A673 (cell line): ENCODE measurements at regions of chr13 and their contacts with region 1.

Region 1: GRCh38 chr13:41668130-41668757 is 210.9 kb downstream of the RGCC start:
- DNase-seq: peak; percentile 90
- H3K4me3 ChIP-seq: no peak overlapping the region
- H3K27ac ChIP-seq: no peak overlapping the region
- H3K4me1 ChIP-seq: no peaks in the 10 kb centered on the region
- H3K27me3 ChIP-seq: no peaks in the 10 kb centered on the region
- CTCF ChIP-seq: peak; percentile 81

Region 2: DNA sequence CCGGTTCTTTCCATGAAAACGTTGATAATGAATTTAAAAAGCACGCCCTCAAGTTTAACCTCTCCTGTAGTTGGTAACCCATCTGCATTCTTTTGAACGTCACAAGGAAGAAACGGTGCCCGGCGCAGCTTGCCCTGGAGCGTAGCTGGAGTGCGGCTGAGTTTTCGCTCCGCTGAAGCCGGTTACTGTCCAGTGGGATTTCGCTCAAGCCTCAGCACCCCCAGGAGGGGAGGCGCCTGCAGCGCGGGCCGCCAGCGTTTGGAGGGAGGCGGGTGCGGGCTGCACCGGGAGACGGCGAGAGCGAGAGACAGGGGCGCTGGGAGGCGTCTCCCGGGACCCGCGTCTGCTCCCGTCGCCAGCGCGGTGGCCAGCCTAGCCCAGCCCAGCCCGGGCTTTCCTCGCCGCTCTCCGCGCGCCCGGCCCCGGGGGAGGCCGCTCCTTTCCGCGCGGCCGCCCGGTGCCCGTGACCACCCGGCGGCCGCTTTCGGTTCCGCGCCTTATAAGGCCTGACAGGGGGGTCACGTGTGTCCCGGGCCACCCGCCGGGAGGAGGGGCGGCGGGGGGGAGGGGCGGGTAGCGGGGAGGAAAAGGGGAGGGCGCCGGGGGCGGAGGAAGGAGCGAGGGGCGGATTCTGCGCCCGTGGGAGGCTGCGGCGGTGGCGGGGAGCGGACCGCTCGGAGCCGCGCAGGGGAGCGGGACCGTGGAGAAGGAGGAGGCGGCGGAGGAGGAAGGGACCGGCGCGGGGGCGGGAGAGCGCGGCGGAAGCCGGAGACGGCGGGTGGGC is 371.9 kb after region 1 on chr13:
- CTCF ChIA-PET with region 1: no interaction called
- POLR2A ChIA-PET with region 1: no interaction called
- intact Hi-C with region 1: loop called (anchors 5 kb)
- DNase-seq: peak; percentile 88
- H3K4me3 ChIP-seq: peak overlapping the region; percentile 75
- H3K27ac ChIP-seq: peak overlapping the region; percentile 81
- H3K4me1 ChIP-seq: peaks cover 12% of the 10 kb centered on the region
- H3K27me3 ChIP-seq: no peaks in the 10 kb centered on the region
- CTCF ChIP-seq: no peak

Region 3: DNA sequence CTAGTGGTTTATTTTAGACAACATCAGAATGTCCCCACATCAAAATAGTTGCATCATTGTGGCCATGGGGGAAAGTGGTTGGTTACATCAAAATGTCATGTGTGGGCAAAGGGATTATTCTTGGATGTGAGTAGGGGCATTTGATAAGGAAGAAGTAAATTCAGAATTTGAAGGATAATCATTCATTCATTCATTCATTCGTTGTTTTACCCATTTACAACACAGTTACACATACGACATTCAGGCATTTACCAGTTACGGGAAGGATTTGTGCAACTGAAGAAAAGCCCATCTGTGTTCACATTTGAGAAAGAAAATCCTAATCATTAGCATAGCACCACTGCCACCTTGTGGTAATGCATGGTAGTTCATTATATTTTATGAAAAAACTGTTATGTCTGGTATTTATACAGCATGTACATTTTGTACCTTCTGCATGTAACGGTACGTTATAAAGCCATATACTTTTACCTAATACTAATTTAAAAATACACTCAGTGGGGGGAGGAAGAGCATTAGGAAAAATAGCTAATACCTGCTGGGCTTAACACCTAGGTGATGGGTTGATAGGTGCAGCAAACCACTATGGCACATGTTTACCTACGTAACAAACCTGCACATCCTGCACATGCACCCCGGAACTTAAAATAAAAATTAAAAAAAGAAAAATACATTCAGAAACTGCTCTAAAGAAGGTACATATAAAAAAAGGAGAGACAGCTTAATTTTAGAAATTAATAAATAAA is 442.3 kb after region 1 on chr13:
- CTCF ChIA-PET with region 1: no interaction called
- POLR2A ChIA-PET with region 1: no interaction called
- intact Hi-C with region 1: loop called (anchors 2 kb)
- DNase-seq: peak; percentile 80
- H3K4me3 ChIP-seq: no peak overlapping the region
- H3K27ac ChIP-seq: no peak overlapping the region
- H3K4me1 ChIP-seq: no peaks in the 10 kb centered on the region
- H3K27me3 ChIP-seq: no peaks in the 10 kb centered on the region
- CTCF ChIP-seq: peak; percentile 76

Region 4: GRCh38 chr13:42215578-42216421 is 547.6 kb after region 1 on chr13:
- CTCF ChIA-PET with region 1: no interaction called
- POLR2A ChIA-PET with region 1: no interaction called
- intact Hi-C with region 1: loop called (anchors 10 kb)
- DNase-seq: peak; percentile 44
- H3K4me3 ChIP-seq: no peak overlapping the region
- H3K27ac ChIP-seq: no peak overlapping the region
- H3K4me1 ChIP-seq: no peaks in the 10 kb centered on the region
- H3K27me3 ChIP-seq: no peaks in the 10 kb centered on the region
- CTCF ChIP-seq: peak; percentile 71